ENCODE measurements at regions of chr2 and their contacts with region 1.

Region 1: DNA sequence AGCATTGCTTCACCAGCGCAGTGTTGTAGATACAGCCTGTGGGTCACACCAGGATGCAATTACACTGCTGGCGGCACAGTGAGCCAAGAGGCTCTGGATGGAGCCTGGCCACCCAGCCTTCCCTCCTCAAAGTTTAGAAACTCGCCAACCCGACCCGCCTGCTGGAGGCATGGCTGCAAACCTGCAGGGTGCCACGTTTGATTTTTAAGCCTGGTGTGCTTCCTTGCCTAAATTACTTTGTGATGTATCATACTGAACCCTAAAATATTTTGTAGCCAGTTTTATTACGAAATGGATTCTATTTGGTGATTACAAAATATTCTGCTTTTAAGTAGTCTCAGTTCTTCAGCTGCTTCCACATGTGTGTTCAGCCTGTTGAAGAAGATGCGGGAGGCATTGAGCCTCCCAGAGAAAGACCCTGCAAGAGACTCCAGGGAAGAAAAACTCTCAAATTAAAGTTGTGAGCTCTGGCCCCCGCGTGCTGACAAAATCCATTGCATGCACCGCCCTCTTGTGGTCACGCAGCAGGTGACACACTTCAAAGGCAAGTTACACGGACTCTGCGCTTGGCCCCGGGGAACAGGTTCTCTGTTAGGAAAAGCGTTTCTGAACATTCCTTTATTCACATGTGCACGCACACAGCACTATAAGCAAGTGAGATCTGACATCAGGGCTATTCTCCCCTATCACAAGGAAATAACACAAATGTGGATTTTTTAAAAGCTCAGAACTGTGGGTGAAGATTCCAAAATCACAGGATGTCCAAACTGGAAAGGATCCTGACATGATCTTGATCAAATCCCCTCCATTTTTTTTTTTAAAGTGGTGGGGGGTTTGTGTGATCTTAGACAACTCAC is 63.0 kb upstream of the TWIST2 start:
- DNase-seq: peak; percentile 88
- H3K4me3 ChIP-seq: no peak overlapping the region
- H3K27ac ChIP-seq: peak overlapping the region; percentile 27 to 53 (median 44)
- H3K4me1 ChIP-seq: peaks cover 0 to 17% (median 10%) of the 10 kb centered on the region in 4 donors
- H3K27me3 ChIP-seq: no peaks in the 10 kb centered on the region
- CTCF ChIP-seq: peak; percentile 77 to 92 (median 86)
- EP300 ChIP-seq: no peak
- POLR2A ChIP-seq: no peak

Region 2: GRCh38 chr2:237374284-237375060 is 1410.4 kb before region 1 on chr2:
- intact Hi-C with region 1: no loop called
- DNase-seq: no peak
- H3K4me3 ChIP-seq: no peak overlapping the region
- H3K27ac ChIP-seq: peak overlapping the region; percentile 0 to 82 (median 72)
- H3K4me1 ChIP-seq: peaks cover 0 to 71% (median 52%) of the 10 kb centered on the region in 4 donors
- H3K27me3 ChIP-seq: no peaks in the 10 kb centered on the region
- CTCF ChIP-seq: no peak
- EP300 ChIP-seq: no peak
- POLR2A ChIP-seq: no peak

Region 3: DNA sequence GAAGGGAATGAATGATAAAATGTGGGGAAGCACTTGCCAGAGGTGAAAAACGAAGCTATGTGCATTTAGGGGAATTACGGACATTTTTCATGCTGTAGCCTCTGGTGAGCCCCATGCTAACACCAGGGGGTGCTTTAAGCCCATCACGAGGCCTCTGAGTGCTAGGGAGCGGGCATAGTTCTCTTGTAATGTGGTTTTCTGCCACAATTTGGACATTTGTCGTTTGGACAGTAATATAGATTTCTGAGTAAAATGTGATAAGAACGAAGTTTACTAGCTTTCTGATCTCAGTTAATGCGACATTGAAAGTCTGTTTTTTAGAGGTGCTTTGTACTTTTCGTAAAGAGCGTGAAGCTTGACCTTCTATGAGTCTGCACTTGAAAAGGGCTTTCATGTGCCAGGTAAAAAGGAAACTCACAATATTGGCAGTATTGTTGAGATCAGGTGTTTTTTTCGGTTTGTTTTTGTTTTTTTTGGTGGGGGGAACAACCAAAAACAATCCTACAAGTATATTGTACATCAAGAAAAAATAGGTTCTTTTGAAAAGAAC is 414.0 kb before region 1 on chr2:
- intact Hi-C with region 1: loop called (anchors 2 kb)
- DNase-seq: peak; percentile 78
- H3K4me3 ChIP-seq: no peak overlapping the region
- H3K27ac ChIP-seq: no peak overlapping the region
- H3K4me1 ChIP-seq: peaks cover 0 to 13% (median 2%) of the 10 kb centered on the region in 4 donors
- H3K27me3 ChIP-seq: no peaks in the 10 kb centered on the region
- CTCF ChIP-seq: peak; percentile 65 to 77 (median 72)
- EP300 ChIP-seq: no peak
- POLR2A ChIP-seq: no peak

Region 4: DNA sequence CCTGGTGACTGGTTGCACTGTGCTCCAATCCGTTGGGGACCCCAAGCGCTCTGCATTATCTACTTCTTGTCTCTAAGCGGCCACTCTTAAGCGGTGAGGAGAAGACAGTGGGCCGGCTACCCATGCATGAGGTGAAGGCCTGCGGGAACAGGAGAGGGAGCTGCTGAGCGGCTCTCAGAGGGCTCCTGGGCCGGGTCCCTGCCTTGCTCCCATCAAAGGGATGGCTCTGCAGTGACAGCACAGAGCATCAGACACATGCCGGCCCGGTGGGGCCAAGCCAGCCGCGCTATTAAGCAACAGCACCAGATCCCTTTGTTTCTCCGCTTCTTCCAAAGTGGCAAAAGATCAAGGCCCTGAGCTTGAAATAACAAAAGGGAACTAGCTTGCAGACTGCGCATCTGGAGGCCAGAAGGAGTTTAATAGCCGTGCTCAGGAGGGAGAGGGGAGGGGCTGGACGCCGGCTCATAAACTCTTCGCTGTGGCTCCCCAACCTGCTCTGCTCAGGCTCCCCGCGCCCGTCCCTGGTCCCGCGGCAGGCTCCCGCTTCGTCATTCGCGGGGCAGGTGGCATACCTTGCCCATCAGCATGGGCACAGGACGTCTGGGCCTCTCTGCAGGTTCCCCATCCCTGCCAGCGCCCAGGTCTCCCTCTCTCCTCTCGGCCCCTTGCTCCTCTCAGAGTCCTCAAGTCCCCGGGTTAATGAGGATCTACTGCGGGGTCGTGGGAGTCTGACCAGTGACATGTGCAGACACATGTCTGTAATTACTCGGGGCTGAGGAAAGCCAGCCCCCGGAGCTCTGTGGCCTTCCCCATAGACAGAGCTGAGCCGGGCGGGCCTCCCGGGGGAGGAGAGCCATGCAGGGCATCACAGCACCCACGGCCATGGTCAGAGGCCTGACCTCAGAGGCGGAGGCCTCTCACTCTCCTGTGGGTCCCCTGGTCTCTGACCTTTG is 261.5 kb before region 1 on chr2:
- intact Hi-C with region 1: loop called (anchors 1 kb)
- DNase-seq: peak; percentile 97
- H3K4me3 ChIP-seq: peak overlapping the region in 2 of 4 donors; percentile 8 to 14
- H3K27ac ChIP-seq: peak overlapping the region; percentile 44 to 81 (median 63)
- H3K4me1 ChIP-seq: peaks cover 0 to 20% (median 15%) of the 10 kb centered on the region in 4 donors
- H3K27me3 ChIP-seq: no peaks in the 10 kb centered on the region
- CTCF ChIP-seq: peak; percentile 33 to 51 (median 40)
- EP300 ChIP-seq: peak in 2 of 4 donors; percentile 23 to 44
- POLR2A ChIP-seq: no peak

Region 5: DNA sequence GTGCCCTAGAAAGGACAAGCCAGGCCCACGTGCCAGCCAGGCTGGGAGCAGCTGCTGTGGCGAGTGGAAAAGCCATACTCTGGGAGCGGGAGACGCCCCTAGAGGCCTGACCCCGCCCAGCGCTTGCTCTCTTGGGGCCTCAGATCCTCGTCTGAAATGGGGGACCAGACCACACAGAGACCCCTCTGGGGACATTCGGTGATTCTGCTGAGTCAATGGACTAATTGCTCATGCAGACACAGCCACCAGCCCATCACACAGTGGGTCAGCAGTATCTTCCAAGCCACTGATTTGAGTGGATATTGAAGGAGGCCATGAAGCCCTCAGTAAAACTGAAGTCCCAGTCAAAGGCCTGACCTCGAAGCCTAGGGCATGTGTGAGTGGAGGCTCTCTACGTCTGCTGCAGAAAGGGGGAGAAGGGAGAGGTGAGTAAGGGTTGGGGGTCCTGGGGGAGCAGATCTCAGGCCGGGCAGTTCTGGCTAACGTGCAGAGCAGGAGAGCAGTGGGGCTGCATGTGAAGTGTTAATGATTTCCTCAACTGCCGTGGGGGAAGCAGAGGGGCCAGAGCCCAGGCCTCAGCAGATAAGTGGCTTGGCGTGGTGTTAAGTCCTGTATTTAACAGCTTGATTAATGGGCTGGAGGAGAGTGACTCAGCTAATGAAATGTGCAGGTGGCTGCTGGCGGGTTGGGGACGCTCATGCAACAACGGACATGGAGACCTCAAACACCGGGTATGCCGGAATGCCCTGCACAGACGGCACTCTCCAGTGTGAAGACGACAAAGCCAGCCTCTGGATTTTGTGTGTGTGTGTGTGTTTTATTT is 41.4 kb before region 1 on chr2:
- intact Hi-C with region 1: loop called (anchors 5 kb)
- DNase-seq: no peak
- H3K4me3 ChIP-seq: no peak overlapping the region
- H3K27ac ChIP-seq: no peak overlapping the region
- H3K4me1 ChIP-seq: peaks cover 0 to 26% (median 11%) of the 10 kb centered on the region in 4 donors
- H3K27me3 ChIP-seq: no peaks in the 10 kb centered on the region
- CTCF ChIP-seq: no peak
- EP300 ChIP-seq: no peak
- POLR2A ChIP-seq: no peak

Region 6: GRCh38 chr2:238954841-238955591 is 170.1 kb after region 1 on chr2:
- intact Hi-C with region 1: no loop called
- DNase-seq: peak; percentile 61
- H3K4me3 ChIP-seq: no peak overlapping the region
- H3K27ac ChIP-seq: no peak overlapping the region
- H3K4me1 ChIP-seq: peaks cover 0 to 12% (median 7%) of the 10 kb centered on the region in 4 donors
- H3K27me3 ChIP-seq: peaks cover 0 to 7% (median 0%) of the 10 kb centered on the region in 3 donors
- CTCF ChIP-seq: no peak
- EP300 ChIP-seq: no peak
- POLR2A ChIP-seq: no peak

Measured in sigmoid colon (tissue), 7 donors.